Mucosa of descending colon (tissue), 3 donors: ENCODE measurements at regions of chr5 and their contacts with region 1.

Region 1: GRCh38 chr5:96876292-96876850 is at the start of gene ERAP2:
- DNase-seq: peak in 2 of 3 donors; percentile 37 to 56
- ATAC-seq: peak; percentile 80
- H3K4me3 ChIP-seq: peak within 1 kb of the TSS; percentile 31
- H3K4me1 ChIP-seq: peaks cover 4% of the 10 kb centered on the region
- CTCF ChIP-seq: no peak
- total RNA-seq, gene ERAP2: 16.1 to 44.8 (median 19.5) TPM

Region 2: GRCh38 chr5:97162045-97162444 is 285.7 kb after region 1 on chr5:
- intact Hi-C with region 1: loop called in 1 of 2 experiments (anchors 10 kb)
- DNase-seq: peak in 1 of 3 donors; percentile 90
- ATAC-seq: peak; percentile 63
- H3K4me3 ChIP-seq: no peak overlapping the region
- H3K4me1 ChIP-seq: peaks cover 8% of the 10 kb centered on the region
- CTCF ChIP-seq: peak; percentile 77